B cell (primary cell): ENCODE measurements at regions of chr6 and their contacts with region 1.

Region 1: DNA sequence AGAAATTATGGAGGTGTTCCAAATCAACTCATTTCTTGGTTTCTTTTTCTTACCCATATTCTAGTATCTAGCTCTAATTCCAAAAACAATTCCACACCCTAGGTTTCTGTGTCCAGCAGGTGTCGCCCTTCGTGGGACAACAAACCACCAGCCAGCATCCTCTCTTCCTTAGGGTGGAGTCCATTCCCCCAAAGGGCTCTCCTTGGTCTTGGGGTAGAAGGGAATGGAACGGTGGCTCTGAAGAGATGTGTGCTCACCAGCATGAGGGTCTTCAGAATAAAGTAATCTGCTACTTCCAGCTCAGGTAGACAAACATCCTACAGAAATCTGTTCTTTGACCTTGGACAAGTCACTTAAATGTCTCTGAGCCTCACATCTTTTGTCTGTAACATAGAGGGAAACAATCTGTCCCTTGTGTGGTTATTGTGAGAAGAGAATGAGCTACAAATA is 7.2 kb downstream of the HLA-DMB start:
- DNase-seq: peak; percentile 82
- ATAC-seq: peak; percentile 60
- H3K4me3 ChIP-seq: no peak overlapping the region
- H3K4me3 Mint-ChIP-seq: peak overlapping the region; percentile 30
- H3K27ac ChIP-seq: peak overlapping the region; percentile 3 to 98
- H3K27ac Mint-ChIP-seq: peak overlapping the region; percentile 84
- H3K4me1 ChIP-seq: peaks cover 76 to 85% of the 10 kb centered on the region in 2 donors
- H3K4me1 Mint-ChIP-seq: peaks cover 88% of the 10 kb centered on the region
- H3K27me3 ChIP-seq: no peaks in the 10 kb centered on the region
- H3K27me3 Mint-ChIP-seq: no peaks in the 10 kb centered on the region
- CTCF ChIP-seq: peak; percentile 84

Region 2: GRCh38 chr6:32439602-32440214 is 494.0 kb before region 1 on chr6 and contains the start of gene HLA-DRA:
- CTCF ChIA-PET with region 1: no interaction called
- POLR2A ChIA-PET with region 1: no interaction called
- intact Hi-C with region 1: no loop called
- DNase-seq: peak; percentile 97
- ATAC-seq: peak; percentile 69
- H3K4me3 ChIP-seq: peak within 1 kb of the TSS; percentile 77 to 100 (median 99)
- H3K4me3 Mint-ChIP-seq: peak within 1 kb of the TSS; percentile 98
- H3K27ac ChIP-seq: peak within 1 kb of the TSS; percentile 99 to 100
- H3K27ac Mint-ChIP-seq: peak within 1 kb of the TSS; percentile 99
- H3K4me1 ChIP-seq: peaks cover 70 to 71% of the 10 kb centered on the region in 2 donors
- H3K4me1 Mint-ChIP-seq: peaks cover 80% of the 10 kb centered on the region
- H3K27me3 ChIP-seq: no peaks in the 10 kb centered on the region
- H3K27me3 Mint-ChIP-seq: no peaks in the 10 kb centered on the region
- CTCF ChIP-seq: no peak
- total RNA-seq, gene HLA-DRA: 2,785 and 2,881 TPM in 2 replicates

Region 3: GRCh38 chr6:32885698-32886286 is 47.9 kb before region 1 on chr6:
- CTCF ChIA-PET with region 1: interaction called, 57 read pairs
- POLR2A ChIA-PET with region 1: no interaction called
- intact Hi-C with region 1: no loop called
- DNase-seq: peak; percentile 87
- ATAC-seq: peak; percentile 65
- H3K4me3 ChIP-seq: no peak overlapping the region
- H3K4me3 Mint-ChIP-seq: no peak overlapping the region
- H3K27ac ChIP-seq: no peak overlapping the region
- H3K27ac Mint-ChIP-seq: no peak overlapping the region
- H3K4me1 ChIP-seq: peaks cover 14 to 15% of the 10 kb centered on the region in 2 donors
- H3K4me1 Mint-ChIP-seq: peaks cover 23% of the 10 kb centered on the region
- H3K27me3 ChIP-seq: no peaks in the 10 kb centered on the region
- H3K27me3 Mint-ChIP-seq: no peaks in the 10 kb centered on the region
- CTCF ChIP-seq: peak; percentile 78

Region 4: GRCh38 chr6:32906539-32906938 is 27.1 kb before region 1 on chr6:
- CTCF ChIA-PET with region 1: interaction called, 18 read pairs
- POLR2A ChIA-PET with region 1: interaction called, 3 read pairs
- intact Hi-C with region 1: no loop called
- DNase-seq: no peak
- ATAC-seq: no peak
- H3K4me3 ChIP-seq: no peak overlapping the region
- H3K4me3 Mint-ChIP-seq: no peak overlapping the region
- H3K27ac ChIP-seq: no peak overlapping the region
- H3K27ac Mint-ChIP-seq: no peak overlapping the region
- H3K4me1 ChIP-seq: peaks cover 0 to 6% of the 10 kb centered on the region in 2 donors
- H3K4me1 Mint-ChIP-seq: peaks cover 12% of the 10 kb centered on the region
- H3K27me3 ChIP-seq: no peaks in the 10 kb centered on the region
- H3K27me3 Mint-ChIP-seq: no peaks in the 10 kb centered on the region
- CTCF ChIP-seq: no peak

Region 5: GRCh38 chr6:32920715-32921114 is 12.9 kb before region 1 on chr6:
- CTCF ChIA-PET with region 1: interaction called, 55 read pairs
- POLR2A ChIA-PET with region 1: interaction called, 4 read pairs
- intact Hi-C with region 1: loop called (anchors 2 kb)
- DNase-seq: peak; percentile 44
- ATAC-seq: peak; percentile 51
- H3K4me3 ChIP-seq: peak overlapping the region in 2 of 5 experiments; percentile 18 to 47
- H3K4me3 Mint-ChIP-seq: peak overlapping the region; percentile 21
- H3K27ac ChIP-seq: peak overlapping the region; percentile 21 to 58
- H3K27ac Mint-ChIP-seq: peak overlapping the region; percentile 57
- H3K4me1 ChIP-seq: peaks cover 33 to 57% of the 10 kb centered on the region in 2 donors
- H3K4me1 Mint-ChIP-seq: peaks cover 65% of the 10 kb centered on the region
- H3K27me3 ChIP-seq: no peaks in the 10 kb centered on the region
- H3K27me3 Mint-ChIP-seq: no peaks in the 10 kb centered on the region
- CTCF ChIP-seq: no peak

Region 6: GRCh38 chr6:32952817-32953739 is 19.4 kb after region 1 on chr6 and contains the start of gene HLA-DMA:
- CTCF ChIA-PET with region 1: interaction called, 462 read pairs
- POLR2A ChIA-PET with region 1: interaction called, 131 read pairs
- intact Hi-C with region 1: loop called (anchors 2 kb)
- DNase-seq: peak; percentile 97
- ATAC-seq: peak; percentile 91
- H3K4me3 ChIP-seq: peak within 1 kb of the TSS; percentile 72 to 98 (median 93)
- H3K4me3 Mint-ChIP-seq: peak within 1 kb of the TSS; percentile 96
- H3K27ac ChIP-seq: peak within 1 kb of the TSS; percentile 91 to 92
- H3K27ac Mint-ChIP-seq: peak within 1 kb of the TSS; percentile 98
- H3K4me1 ChIP-seq: peaks cover 70 to 84% of the 10 kb centered on the region in 2 donors
- H3K4me1 Mint-ChIP-seq: peaks cover 85% of the 10 kb centered on the region
- H3K27me3 ChIP-seq: no peaks in the 10 kb centered on the region
- H3K27me3 Mint-ChIP-seq: no peaks in the 10 kb centered on the region
- CTCF ChIP-seq: peak; percentile 88
- total RNA-seq, gene HLA-DMA: 554 and 558 TPM in 2 replicates